A673 (cell line): ENCODE measurements at regions of chr4 and their contacts with region 1.

Region 1: DNA sequence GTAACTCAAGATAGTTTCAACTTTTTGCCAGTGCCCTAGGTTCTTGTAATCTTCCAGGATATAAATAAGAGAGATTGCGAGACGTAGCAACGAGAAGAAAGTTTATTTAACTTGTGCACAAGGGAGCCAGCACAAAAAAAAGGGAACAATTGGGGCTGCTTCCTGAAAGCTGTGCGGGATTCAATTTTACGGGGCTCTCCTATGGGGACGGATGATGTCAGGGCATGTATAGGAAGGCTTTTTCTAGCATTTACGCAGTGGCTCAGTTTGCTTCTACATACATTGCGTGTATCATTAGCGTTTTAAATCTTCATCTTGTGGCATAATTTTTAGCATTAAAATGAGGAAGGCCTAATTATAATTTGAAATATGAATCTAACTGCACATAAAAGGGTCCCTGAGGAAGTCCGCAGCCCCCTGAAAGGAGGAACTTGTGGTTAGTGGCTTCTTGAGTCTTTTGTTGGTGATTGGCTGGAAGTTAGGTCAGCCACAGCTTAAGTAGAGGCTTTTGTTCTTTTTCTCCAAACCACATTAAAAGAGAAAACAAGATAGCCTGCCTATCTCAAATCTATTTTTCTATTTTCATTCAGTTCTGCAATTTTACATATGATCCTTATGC is 668.2 kb upstream of the NDST4 start:
- DNase-seq: peak; percentile 57
- H3K4me3 ChIP-seq: no peak overlapping the region
- H3K27ac ChIP-seq: peak overlapping the region; percentile 56
- H3K4me1 ChIP-seq: peaks cover 15% of the 10 kb centered on the region
- H3K27me3 ChIP-seq: no peaks in the 10 kb centered on the region
- CTCF ChIP-seq: no peak

Region 2: DNA sequence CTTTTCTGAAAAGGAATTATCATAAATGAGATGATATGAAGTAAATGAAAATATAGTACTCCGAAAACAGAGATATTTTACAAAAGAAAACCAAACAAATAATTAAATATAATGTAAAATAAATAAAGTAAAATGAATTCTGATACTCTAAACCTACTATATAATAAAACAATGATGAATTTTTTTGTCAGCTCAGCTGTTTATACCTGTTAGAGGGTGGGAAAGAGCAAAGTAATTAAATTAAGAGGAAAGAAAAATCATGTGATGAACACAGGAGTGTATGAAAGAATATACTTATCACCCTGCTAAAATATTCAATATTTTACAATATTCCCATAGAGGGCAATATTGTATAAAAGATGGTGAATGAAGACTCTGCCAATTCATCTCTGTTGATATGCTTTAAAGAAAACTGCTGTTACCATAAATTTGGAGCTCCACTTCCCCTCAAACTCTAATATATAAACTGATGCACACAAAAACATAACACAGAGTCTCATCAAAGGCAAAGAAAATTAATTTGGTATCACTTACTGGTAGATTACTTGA is 661.8 kb before region 1 on chr4:
- CTCF ChIA-PET with region 1: no interaction called
- POLR2A ChIA-PET with region 1: no interaction called
- intact Hi-C with region 1: loop called (anchors 5 kb)
- DNase-seq: peak; percentile 67
- H3K4me3 ChIP-seq: no peak overlapping the region
- H3K27ac ChIP-seq: peak overlapping the region; percentile 25
- H3K4me1 ChIP-seq: peaks cover 45% of the 10 kb centered on the region
- H3K27me3 ChIP-seq: no peaks in the 10 kb centered on the region
- CTCF ChIP-seq: peak; percentile 52

Region 3: GRCh38 chr4:115234405-115235093 is 547.1 kb before region 1 on chr4:
- CTCF ChIA-PET with region 1: no interaction called
- POLR2A ChIA-PET with region 1: no interaction called
- intact Hi-C with region 1: loop called (anchors 10 kb)
- DNase-seq: peak; percentile 86
- H3K4me3 ChIP-seq: no peak overlapping the region
- H3K27ac ChIP-seq: peak overlapping the region; percentile 41
- H3K4me1 ChIP-seq: peaks cover 33% of the 10 kb centered on the region
- H3K27me3 ChIP-seq: no peaks in the 10 kb centered on the region
- CTCF ChIP-seq: peak; percentile 68

Region 4: DNA sequence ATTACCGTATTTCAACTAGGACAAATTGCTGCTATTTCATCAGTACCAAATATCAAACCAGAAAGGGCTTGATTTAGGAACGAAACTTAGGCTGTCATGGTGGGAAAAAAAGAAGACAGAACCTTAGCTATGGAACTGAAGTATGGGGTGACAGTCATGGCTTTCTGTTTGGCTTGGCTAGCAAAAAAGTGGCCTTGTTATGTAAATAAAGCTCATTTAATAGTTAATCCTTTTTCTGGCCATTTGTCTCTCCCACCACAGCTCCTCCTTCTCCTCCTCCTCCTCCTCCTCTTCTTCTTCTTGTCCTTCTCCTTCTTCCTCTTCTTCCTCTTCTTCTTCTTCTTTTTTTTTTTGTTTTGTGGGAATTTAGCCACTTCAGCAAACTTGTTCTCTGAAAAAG is 233.5 kb before region 1 on chr4:
- CTCF ChIA-PET with region 1: no interaction called
- POLR2A ChIA-PET with region 1: no interaction called
- intact Hi-C with region 1: loop called (anchors 10 kb)
- DNase-seq: no peak
- H3K4me3 ChIP-seq: no peak overlapping the region
- H3K27ac ChIP-seq: no peak overlapping the region
- H3K4me1 ChIP-seq: peaks cover 5% of the 10 kb centered on the region
- H3K27me3 ChIP-seq: no peaks in the 10 kb centered on the region
- CTCF ChIP-seq: no peak